ENCODE measurements at regions of chr6 and their contacts with region 1.

Region 1: DNA sequence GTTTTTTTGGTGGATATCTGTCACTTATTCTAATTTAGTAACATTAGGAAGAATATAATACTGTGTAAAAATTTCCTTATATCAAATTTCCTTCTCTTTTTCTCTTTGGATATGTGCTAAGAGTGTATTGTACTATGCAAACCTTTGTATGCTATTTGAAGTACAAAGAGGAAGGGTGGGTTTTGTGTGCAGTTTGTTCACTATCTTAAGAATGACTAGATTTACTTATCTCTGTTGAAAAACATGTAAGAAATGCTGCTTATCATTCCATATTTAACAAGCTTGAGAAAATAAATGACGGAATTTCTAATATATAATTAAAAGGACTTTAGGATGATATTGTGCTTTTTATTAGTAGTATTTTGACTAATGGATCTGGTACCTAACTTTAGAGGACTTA is 13.1 kb downstream of the CD2AP start:
- DNase-seq: no peak
- ATAC-seq: no peak
- H3K4me3 Mint-ChIP-seq: no peak overlapping the region
- H3K27ac Mint-ChIP-seq: no peak overlapping the region
- H3K4me1 Mint-ChIP-seq: peaks cover 48% of the 10 kb centered on the region
- H3K27me3 Mint-ChIP-seq: no peaks in the 10 kb centered on the region

Region 2: GRCh38 chr6:47083586-47084047 is 407.1 kb before region 1 on chr6:
- CTCF ChIA-PET with region 1: no interaction called
- POLR2A ChIA-PET with region 1: no interaction called
- intact Hi-C with region 1: no loop called
- DNase-seq: no peak
- ATAC-seq: no peak
- H3K4me3 Mint-ChIP-seq: no peak overlapping the region
- H3K27ac Mint-ChIP-seq: no peak overlapping the region
- H3K4me1 Mint-ChIP-seq: no peaks in the 10 kb centered on the region
- H3K27me3 Mint-ChIP-seq: peaks cover 5% of the 10 kb centered on the region

Region 3: GRCh38 chr6:47527274-47527673 is 36.6 kb after region 1 on chr6:
- CTCF ChIA-PET with region 1: no interaction called
- POLR2A ChIA-PET with region 1: no interaction called
- intact Hi-C with region 1: loop called in 1 of 2 experiments (anchors 1 kb)
- DNase-seq: no peak
- ATAC-seq: no peak
- H3K4me3 Mint-ChIP-seq: no peak overlapping the region
- H3K27ac Mint-ChIP-seq: no peak overlapping the region
- H3K4me1 Mint-ChIP-seq: peaks cover 10% of the 10 kb centered on the region
- H3K27me3 Mint-ChIP-seq: no peaks in the 10 kb centered on the region

Region 4: GRCh38 chr6:47669684-47670513 is 179.2 kb after region 1 on chr6:
- CTCF ChIA-PET with region 1: no interaction called
- POLR2A ChIA-PET with region 1: no interaction called
- intact Hi-C with region 1: no loop called
- DNase-seq: no peak
- ATAC-seq: no peak
- H3K4me3 Mint-ChIP-seq: no peak overlapping the region
- H3K27ac Mint-ChIP-seq: no peak overlapping the region
- H3K4me1 Mint-ChIP-seq: no peaks in the 10 kb centered on the region
- H3K27me3 Mint-ChIP-seq: peaks cover 36% of the 10 kb centered on the region

Measured in activated CD4-positive, alpha-beta T cell treated with anti-CD3 and anti-CD28 coated beads for 36 hours (primary cell).